A673 (cell line): ENCODE measurements at regions of chr9 and their contacts with region 1.

Region 1: GRCh38 chr9:32665101-32665500 is 29.6 kb upstream of the TAF1L start:
- DNase-seq: no peak
- H3K4me3 ChIP-seq: no peak overlapping the region
- H3K27ac ChIP-seq: no peak overlapping the region
- H3K4me1 ChIP-seq: no peaks in the 10 kb centered on the region
- H3K27me3 ChIP-seq: no peaks in the 10 kb centered on the region
- CTCF ChIP-seq: no peak

Region 2: DNA sequence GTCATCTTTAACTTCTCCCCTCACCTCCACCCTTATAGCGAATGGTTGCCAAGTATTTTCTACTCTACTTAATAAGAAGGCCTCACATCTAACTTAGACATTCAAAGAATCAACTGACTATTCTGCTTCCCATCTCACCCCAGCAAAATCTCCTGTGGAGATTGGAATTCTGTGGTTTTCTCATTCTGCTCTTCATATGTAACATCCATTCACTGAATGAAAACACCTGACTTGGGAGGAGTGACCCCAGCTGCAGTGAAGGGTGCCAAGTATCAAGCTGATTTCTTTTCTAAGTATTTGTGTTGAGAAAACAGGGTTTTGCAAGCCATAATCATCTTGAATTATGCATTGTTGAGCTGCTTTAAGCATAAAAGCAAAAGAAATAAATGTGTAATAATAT is 12.8 kb after region 1 on chr9:
- CTCF ChIA-PET with region 1: interaction called, 14 read pairs
- POLR2A ChIA-PET with region 1: no interaction called
- intact Hi-C with region 1: no loop called
- DNase-seq: no peak
- H3K4me3 ChIP-seq: no peak overlapping the region
- H3K27ac ChIP-seq: no peak overlapping the region
- H3K4me1 ChIP-seq: no peaks in the 10 kb centered on the region
- H3K27me3 ChIP-seq: no peaks in the 10 kb centered on the region
- CTCF ChIP-seq: no peak